ENCODE measurements at regions of chr12 and their contacts with region 1.

Region 1: DNA sequence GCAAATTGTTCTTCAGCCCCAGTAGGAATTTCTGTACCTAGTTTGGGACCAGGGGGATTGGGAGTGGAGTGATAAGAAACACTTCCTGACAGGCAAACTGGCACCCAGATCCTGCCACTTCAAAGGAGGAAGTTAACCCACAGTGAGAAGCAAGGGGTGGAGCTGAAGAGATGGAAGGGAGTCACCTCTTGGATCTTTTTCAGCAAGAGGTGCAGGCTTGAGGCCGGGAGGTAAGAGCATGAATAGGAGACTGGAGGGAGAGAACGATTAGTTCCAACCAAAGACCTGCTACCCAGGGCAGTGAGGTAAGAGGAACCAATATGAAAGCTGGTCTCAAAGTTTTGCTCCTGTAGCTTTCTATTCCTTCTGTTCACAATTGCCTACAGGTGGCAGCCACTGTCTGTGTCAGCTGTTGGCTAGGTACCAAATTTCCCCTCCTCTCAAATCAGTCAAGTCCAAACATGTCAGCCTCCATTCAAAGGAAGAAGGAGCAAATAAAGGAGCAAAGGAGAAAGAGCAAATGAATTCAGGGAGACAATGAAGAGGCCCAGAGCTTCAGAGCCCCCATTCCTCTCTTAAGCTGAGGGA is 14.9 kb upstream of the TAC3 start:
- DNase-seq: peak in 1 of 4 experiments; percentile 48
- ATAC-seq: peak; percentile 13; the same call in 2 of the 3 replicates
- H3K4me3 ChIP-seq: no peak overlapping the region
- H3K27ac ChIP-seq: no peak overlapping the region
- H3K4me1 ChIP-seq: peaks cover 15 to 23% of the 10 kb centered on the region in 2 experiments
- H3K27me3 ChIP-seq: no peaks in the 10 kb centered on the region
- CTCF ChIP-seq: peak; percentile 27 to 39 (median 35); a peak in 3 of 6 replicates
- EP300 ChIP-seq: no peak
- POLR2A ChIP-seq: no peak
- RAD21 ChIP-seq: peak in 1 of 2 experiments; percentile 51; a peak in 2 of 4 replicates

Region 2: GRCh38 chr12:57046947-57047890 is 16.0 kb after region 1 on chr12:
- CTCF ChIA-PET with region 1: no interaction called
- POLR2A ChIA-PET with region 1: interaction called, 18 read pairs
- in situ Hi-C with region 1: no loop called
- intact Hi-C with region 1: no loop called
- DNase-seq: no peak
- ATAC-seq: no peak
- H3K4me3 ChIP-seq: no peak overlapping the region
- H3K27ac ChIP-seq: no peak overlapping the region
- H3K4me1 ChIP-seq: peaks cover 0 to 3% of the 10 kb centered on the region in 2 experiments; a peak in 1 of 5 replicates
- H3K27me3 ChIP-seq: peaks cover 15 to 16% of the 10 kb centered on the region in 2 experiments; a peak in 4 of 5 replicates
- CTCF ChIP-seq: no peak
- EP300 ChIP-seq: no peak
- POLR2A ChIP-seq: no peak
- RAD21 ChIP-seq: no peak

Region 3: DNA sequence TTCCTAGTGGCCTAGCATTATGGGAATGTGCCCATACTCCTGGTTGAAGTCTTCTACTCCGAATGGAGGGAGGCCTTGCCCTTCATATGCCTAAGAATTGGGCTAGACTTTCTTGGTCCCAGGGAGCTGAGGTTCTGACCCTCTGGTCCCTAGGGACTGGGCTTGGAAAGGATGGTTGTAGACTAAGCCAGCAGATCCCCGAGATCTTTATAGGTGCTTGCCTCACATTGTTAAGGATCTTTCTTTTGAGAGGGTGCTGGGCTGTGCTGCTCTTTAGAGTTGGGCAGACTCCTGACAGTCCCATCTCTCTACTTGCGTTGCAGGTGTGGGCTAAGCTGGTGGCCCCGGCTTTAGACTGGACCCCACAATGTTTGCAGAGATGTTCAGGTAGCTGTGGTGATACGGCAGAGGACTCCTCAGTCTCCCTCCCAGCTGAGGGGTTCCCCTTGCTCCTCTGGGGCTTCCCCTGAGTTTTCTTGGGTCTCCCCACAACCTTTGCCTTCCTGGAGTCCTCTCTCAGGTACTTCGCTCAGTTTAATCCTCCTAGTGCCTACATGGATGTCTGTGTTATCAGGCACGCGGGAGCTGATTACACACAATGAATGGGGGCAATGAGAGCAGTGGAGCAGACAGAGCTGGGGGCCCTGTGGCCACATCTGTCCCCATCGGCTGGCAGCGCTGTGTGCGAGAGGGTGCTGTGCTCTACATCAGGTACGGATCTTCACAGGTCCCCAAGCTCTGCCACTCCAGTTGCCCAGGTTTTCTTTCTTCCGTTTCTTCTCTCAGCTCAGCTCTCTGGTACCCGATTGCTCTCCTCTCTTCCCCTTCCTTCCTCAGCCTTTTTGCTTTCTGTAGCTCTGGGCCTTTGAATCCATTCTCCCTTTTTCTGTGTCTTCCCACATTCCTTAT is 492.7 kb after region 1 on chr12:
- CTCF ChIA-PET with region 1: no interaction called
- POLR2A ChIA-PET with region 1: no interaction called
- in situ Hi-C with region 1: no loop called
- intact Hi-C with region 1: no loop called
- DNase-seq: no peak
- ATAC-seq: no peak
- H3K4me3 ChIP-seq: peak overlapping the region; percentile 77
- H3K27ac ChIP-seq: peak overlapping the region; percentile 96
- H3K4me1 ChIP-seq: peaks cover 29 to 47% of the 10 kb centered on the region in 2 experiments
- H3K27me3 ChIP-seq: no peaks in the 10 kb centered on the region
- CTCF ChIP-seq: no peak
- EP300 ChIP-seq: no peak
- POLR2A ChIP-seq: peak; percentile 55
- RAD21 ChIP-seq: no peak

Measured in K562 (cell line).